Caco-2 (cell line): ENCODE measurements at regions of chr6 and their contacts with region 1.

Region 1: GRCh38 chr6:42166444-42167141 is 6.6 kb upstream of the GUCA1A start:
- DNase-seq: peak; percentile 87 to 88
- H3K4me3 ChIP-seq: no peak overlapping the region
- H3K4me3 Mint-ChIP-seq: peak overlapping the region; percentile 30
- H3K27ac Mint-ChIP-seq: peak overlapping the region; percentile 97
- H3K4me1 ChIP-seq: 0 out of 2 replicates have a peak, but pooled peaks cover 3% of the 10 kb centered on the region
- H3K4me1 Mint-ChIP-seq: peaks cover 7% of the 10 kb centered on the region
- H3K27me3 ChIP-seq: no peaks in the 10 kb centered on the region
- H3K27me3 Mint-ChIP-seq: no peaks in the 10 kb centered on the region
- CTCF ChIP-seq: peak; percentile 90 to 97

Region 2: DNA sequence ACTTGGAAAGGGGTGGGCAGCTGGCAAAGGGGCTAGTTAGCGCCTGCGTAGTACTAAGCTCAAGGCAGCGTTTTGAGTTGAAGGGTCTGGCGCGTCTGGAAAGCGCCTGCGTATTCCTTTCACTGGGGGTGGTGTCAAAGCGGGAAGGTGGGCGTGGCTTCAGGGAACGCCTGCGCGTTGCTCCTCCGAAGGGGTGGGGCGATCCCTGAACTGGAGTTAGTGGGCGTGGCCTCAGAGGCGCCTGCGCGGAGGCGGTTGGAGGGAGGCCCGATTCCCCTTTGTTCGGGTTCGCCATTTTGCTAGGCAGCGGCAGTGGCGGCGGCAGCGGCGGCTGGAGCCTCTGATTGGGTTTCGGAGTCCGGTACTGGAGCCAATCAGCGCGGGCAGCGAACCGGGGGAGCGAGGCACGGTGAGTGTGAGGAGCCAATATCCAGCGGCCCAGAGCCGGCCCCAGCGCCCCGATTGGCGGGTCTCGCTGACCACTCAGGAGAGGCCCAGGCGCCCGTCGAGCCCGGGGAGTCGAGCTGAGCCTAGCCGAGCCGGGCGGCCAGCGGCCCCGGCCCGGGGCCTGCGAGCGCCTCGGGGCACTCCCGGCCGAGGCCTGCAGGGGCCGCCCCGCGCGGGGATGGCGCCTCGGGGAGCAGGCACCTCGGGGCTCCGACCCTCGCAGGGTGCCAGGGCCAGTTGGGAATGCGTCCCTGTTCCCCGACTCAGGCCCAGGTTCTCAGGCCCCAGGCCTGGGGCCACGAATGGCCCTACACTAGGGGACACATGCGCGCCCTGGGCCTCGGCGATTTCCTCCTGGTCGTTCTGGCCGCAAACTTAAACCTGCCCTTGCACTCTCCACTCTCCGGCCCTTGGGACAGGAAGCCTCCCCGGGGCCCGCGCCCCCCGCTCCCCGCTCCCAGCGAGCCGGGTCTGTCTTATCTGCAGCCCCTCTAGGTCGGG is 1093.6 kb before region 1 on chr6 and contains the start of gene NFYA:
- CTCF ChIA-PET with region 1: no interaction called
- POLR2A ChIA-PET with region 1: no interaction called
- intact Hi-C with region 1: no loop called
- DNase-seq: peak; percentile 99
- H3K4me3 ChIP-seq: peak within 1 kb of the TSS; percentile 98
- H3K4me3 Mint-ChIP-seq: peak within 1 kb of the TSS; percentile 92
- H3K27ac Mint-ChIP-seq: peak within 1 kb of the TSS; percentile 95
- H3K4me1 ChIP-seq: peaks cover 16% of the 10 kb centered on the region; the same call in 1 of the 2 replicates
- H3K4me1 Mint-ChIP-seq: peaks cover 29% of the 10 kb centered on the region
- H3K27me3 ChIP-seq: no peaks in the 10 kb centered on the region
- H3K27me3 Mint-ChIP-seq: no peaks in the 10 kb centered on the region
- CTCF ChIP-seq: peak; percentile 16 to 43
- total RNA-seq, gene NFYA: 25.7 and 27.7 TPM in 2 replicates

Region 3: DNA sequence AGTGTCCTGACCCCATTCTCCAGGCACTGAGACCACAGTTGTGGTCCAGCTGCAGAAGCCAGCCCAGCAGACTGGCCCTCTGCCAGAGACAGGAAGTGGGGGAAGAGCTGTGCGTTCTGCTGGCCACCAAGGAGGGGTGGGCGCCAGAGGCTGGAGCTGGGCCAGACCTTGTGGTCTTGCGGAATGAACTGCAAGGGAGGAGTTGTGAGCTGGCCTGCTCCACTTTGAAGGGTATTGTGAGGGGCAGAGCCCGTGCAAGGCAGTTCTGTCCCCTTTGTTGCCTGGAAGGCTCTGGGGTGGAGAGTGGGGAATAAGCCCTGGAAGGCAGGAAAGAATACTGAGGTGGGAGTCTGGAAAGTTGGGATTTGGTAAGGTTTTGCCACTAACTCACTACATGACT is 531.9 kb before region 1 on chr6:
- CTCF ChIA-PET with region 1: no interaction called
- POLR2A ChIA-PET with region 1: no interaction called
- intact Hi-C with region 1: no loop called
- DNase-seq: peak in 1 of 2 experiments; percentile 7
- H3K4me3 ChIP-seq: no peak overlapping the region
- H3K4me3 Mint-ChIP-seq: no peak overlapping the region
- H3K27ac Mint-ChIP-seq: no peak overlapping the region
- H3K4me1 ChIP-seq: no peaks in the 10 kb centered on the region
- H3K4me1 Mint-ChIP-seq: no peaks in the 10 kb centered on the region
- H3K27me3 ChIP-seq: no peaks in the 10 kb centered on the region
- H3K27me3 Mint-ChIP-seq: peaks cover 3% of the 10 kb centered on the region
- CTCF ChIP-seq: no peak

Region 4: DNA sequence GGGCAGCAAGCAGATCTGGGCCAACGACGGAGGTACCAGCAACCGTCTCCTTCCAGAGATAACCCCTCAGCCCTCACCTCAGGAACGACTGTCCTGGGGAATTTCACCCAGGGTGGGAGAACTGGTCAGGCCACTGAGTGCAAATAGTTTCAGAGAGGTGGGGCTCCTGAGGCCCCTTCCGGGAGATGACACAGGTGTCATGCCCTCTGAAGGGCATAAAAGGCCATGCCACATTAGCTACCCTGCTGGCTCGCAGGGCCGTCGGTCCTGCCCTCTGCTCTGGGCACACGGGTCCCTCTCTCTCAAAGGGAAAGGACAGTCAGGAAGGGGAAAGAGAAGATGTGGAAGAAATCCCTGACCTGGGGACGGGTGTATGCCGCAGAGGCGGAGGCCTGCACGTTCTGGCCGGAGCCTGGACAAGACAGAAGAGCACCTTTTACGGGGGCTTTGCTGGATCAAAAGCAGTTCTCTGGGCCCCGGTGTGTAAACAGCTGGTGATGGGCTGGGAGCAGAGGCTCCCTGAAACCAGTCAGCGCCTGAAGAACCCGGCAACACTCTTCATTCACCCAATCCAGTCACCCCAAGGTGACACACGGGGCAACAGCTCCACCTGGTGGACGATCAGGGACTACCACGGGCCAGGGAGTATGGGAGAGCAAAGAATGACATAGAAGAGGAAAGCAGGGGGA is 122.7 kb before region 1 on chr6:
- CTCF ChIA-PET with region 1: no interaction called
- POLR2A ChIA-PET with region 1: no interaction called
- intact Hi-C with region 1: no loop called
- DNase-seq: peak; percentile 88 to 93
- H3K4me3 ChIP-seq: 0 out of 2 replicates have a peak overlapping the region, but pooled peaks have one; percentile 9
- H3K4me3 Mint-ChIP-seq: peak overlapping the region; percentile 76
- H3K27ac Mint-ChIP-seq: peak overlapping the region; percentile 95
- H3K4me1 ChIP-seq: peaks cover 17% of the 10 kb centered on the region
- H3K4me1 Mint-ChIP-seq: peaks cover 9% of the 10 kb centered on the region
- H3K27me3 ChIP-seq: no peaks in the 10 kb centered on the region
- H3K27me3 Mint-ChIP-seq: no peaks in the 10 kb centered on the region
- CTCF ChIP-seq: peak; percentile 90 to 92

Region 5: GRCh38 chr6:42075159-42075838 is 91.3 kb before region 1 on chr6:
- CTCF ChIA-PET with region 1: no interaction called
- POLR2A ChIA-PET with region 1: no interaction called
- intact Hi-C with region 1: loop called (anchors 1 kb)
- DNase-seq: peak; percentile 78 to 87
- H3K4me3 ChIP-seq: no peak overlapping the region
- H3K4me3 Mint-ChIP-seq: no peak overlapping the region
- H3K27ac Mint-ChIP-seq: no peak overlapping the region
- H3K4me1 ChIP-seq: no peaks in the 10 kb centered on the region
- H3K4me1 Mint-ChIP-seq: no peaks in the 10 kb centered on the region
- H3K27me3 ChIP-seq: no peaks in the 10 kb centered on the region
- H3K27me3 Mint-ChIP-seq: no peaks in the 10 kb centered on the region
- CTCF ChIP-seq: peak; percentile 83 to 89

Region 6: GRCh38 chr6:42095785-42096541 is 70.6 kb before region 1 on chr6:
- CTCF ChIA-PET with region 1: interaction called, 3 read pairs
- POLR2A ChIA-PET with region 1: no interaction called
- intact Hi-C with region 1: loop called (anchors 1 kb)
- DNase-seq: peak in 1 of 2 experiments; percentile 50
- H3K4me3 ChIP-seq: no peak overlapping the region
- H3K4me3 Mint-ChIP-seq: no peak overlapping the region
- H3K27ac Mint-ChIP-seq: peak overlapping the region; percentile 61
- H3K4me1 ChIP-seq: no peaks in the 10 kb centered on the region
- H3K4me1 Mint-ChIP-seq: peaks cover 10% of the 10 kb centered on the region
- H3K27me3 ChIP-seq: no peaks in the 10 kb centered on the region
- H3K27me3 Mint-ChIP-seq: no peaks in the 10 kb centered on the region
- CTCF ChIP-seq: peak in 1 of 2 experiments; percentile 31

Region 7: DNA sequence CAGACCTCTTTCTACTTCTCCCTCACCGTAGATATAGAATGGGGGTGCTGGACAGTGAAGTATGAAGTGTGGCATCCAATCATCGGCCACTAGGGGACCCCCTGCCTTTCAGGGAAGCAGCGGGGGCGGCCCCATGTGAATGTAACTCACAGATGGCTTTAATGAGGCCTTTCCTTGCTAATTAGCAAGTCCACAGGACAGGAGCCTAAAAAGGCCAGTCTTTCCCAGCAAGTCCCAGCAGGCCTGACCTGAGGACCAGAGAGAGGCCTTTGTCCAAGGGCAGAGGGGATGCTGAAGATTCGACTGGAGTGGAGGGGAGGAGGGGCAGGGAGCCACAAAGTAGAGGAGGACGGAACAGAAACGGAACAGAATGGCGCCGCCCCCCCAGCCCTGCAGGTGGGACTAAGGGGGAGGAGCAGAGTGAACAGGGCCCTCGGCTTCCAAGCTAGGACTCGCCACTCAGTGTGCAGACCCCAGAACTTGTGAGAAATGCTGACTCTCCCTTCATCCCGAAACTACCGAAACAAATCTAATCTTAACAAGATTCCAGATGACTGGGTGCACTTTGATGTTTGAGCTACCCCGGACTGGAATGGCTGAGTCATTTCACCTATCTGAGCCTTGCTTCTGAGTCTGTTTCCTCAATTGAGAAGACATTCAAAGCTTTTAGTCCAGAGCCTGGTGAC is 29.9 kb before region 1 on chr6:
- CTCF ChIA-PET with region 1: interaction called, 3 read pairs
- POLR2A ChIA-PET with region 1: no interaction called
- intact Hi-C with region 1: loop called (anchors 1 kb)
- DNase-seq: peak; percentile 60 to 70
- H3K4me3 ChIP-seq: no peak overlapping the region
- H3K4me3 Mint-ChIP-seq: peak overlapping the region; percentile 67
- H3K27ac Mint-ChIP-seq: peak overlapping the region; percentile 95
- H3K4me1 ChIP-seq: peaks cover 55% of the 10 kb centered on the region
- H3K4me1 Mint-ChIP-seq: peaks cover 37% of the 10 kb centered on the region
- H3K27me3 ChIP-seq: no peaks in the 10 kb centered on the region
- H3K27me3 Mint-ChIP-seq: no peaks in the 10 kb centered on the region
- CTCF ChIP-seq: peak; percentile 42 to 51

Region 8: DNA sequence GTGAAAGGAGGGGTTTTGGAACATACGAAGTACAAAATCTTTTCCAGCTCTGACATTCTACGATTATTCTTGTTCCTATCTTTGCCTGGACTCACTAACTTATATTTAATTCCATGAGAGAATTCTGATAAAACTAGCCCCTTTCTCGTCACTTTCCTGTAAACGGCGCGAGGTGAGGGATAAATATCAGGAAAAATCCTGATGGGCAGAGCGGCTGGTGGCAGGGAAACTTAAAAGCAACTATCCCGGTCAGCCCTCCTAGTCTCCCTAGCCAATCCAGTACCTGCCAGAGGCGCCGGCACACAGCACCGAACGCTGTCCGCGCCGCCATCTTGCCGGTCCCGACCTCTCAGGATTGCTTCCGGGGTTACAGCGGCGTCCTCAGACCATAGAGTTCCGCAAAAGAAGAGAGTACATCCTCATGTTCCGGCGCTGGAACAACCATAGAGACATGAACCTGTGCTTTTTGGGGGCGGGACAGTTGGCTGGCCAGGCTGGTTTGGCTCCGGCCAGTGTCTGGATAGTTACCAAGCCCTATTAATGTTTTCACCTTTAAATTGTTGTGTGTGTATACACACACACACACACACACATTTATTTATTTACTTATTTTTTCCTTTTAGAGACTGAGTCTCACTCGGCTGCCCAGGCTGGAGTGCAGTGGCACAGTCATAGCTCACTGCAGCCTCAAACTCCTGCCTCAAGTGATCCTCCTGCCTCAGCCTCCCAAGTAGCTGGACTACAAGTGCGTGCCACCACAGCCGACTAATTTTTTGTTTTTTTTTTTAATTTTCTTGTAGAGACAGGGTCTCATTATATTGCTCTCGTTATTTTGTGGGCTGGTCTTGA is 51.1 kb after region 1 on chr6 and contains the start of gene MRPS10:
- CTCF ChIA-PET with region 1: interaction called, 30 read pairs
- POLR2A ChIA-PET with region 1: no interaction called
- intact Hi-C with region 1: loop called (anchors 1 kb)
- DNase-seq: peak; percentile 93 to 94
- H3K4me3 ChIP-seq: peak within 1 kb of the TSS; percentile 87
- H3K4me3 Mint-ChIP-seq: peak within 1 kb of the TSS; percentile 99
- H3K27ac Mint-ChIP-seq: peak within 1 kb of the TSS; percentile 99
- H3K4me1 ChIP-seq: peaks cover 7% of the 10 kb centered on the region
- H3K4me1 Mint-ChIP-seq: no peaks in the 10 kb centered on the region
- H3K27me3 ChIP-seq: no peaks in the 10 kb centered on the region
- H3K27me3 Mint-ChIP-seq: no peaks in the 10 kb centered on the region
- CTCF ChIP-seq: no peak
- total RNA-seq, gene MRPS10: 32.3 and 38.6 TPM in 2 replicates

Region 9: GRCh38 chr6:42230345-42231321 is 64.0 kb after region 1 on chr6:
- CTCF ChIA-PET with region 1: interaction called, 5 read pairs
- POLR2A ChIA-PET with region 1: no interaction called
- intact Hi-C with region 1: loop called (anchors 1 kb)
- DNase-seq: peak in 1 of 2 experiments; percentile 29
- H3K4me3 ChIP-seq: no peak overlapping the region
- H3K4me3 Mint-ChIP-seq: no peak overlapping the region
- H3K27ac Mint-ChIP-seq: peak overlapping the region; percentile 4
- H3K4me1 ChIP-seq: peaks cover 28% of the 10 kb centered on the region
- H3K4me1 Mint-ChIP-seq: peaks cover 37% of the 10 kb centered on the region
- H3K27me3 ChIP-seq: no peaks in the 10 kb centered on the region
- H3K27me3 Mint-ChIP-seq: no peaks in the 10 kb centered on the region
- CTCF ChIP-seq: peak; percentile 57 to 76

Region 10: GRCh38 chr6:42509256-42509655 is 342.7 kb after region 1 on chr6:
- CTCF ChIA-PET with region 1: no interaction called
- POLR2A ChIA-PET with region 1: interaction called, 11 read pairs
- intact Hi-C with region 1: no loop called
- DNase-seq: no peak
- H3K4me3 ChIP-seq: no peak overlapping the region
- H3K4me3 Mint-ChIP-seq: no peak overlapping the region
- H3K27ac Mint-ChIP-seq: no peak overlapping the region
- H3K4me1 ChIP-seq: no peaks in the 10 kb centered on the region
- H3K4me1 Mint-ChIP-seq: no peaks in the 10 kb centered on the region
- H3K27me3 ChIP-seq: no peaks in the 10 kb centered on the region
- H3K27me3 Mint-ChIP-seq: peaks cover 4% of the 10 kb centered on the region
- CTCF ChIP-seq: no peak